H1 (cell line): ENCODE measurements at regions of chr9 and their contacts with region 1.

Region 1: GRCh38 chr9:36008774-36009300 is 27.9 kb upstream of the RECK start:
- DNase-seq: peak; percentile 50 to 77
- H3K4me3 ChIP-seq: no peak overlapping the region
- H3K27ac ChIP-seq: no peak overlapping the region
- H3K4me1 ChIP-seq: no peaks in the 10 kb centered on the region
- H3K27me3 ChIP-seq: peaks cover 0 to 4% (median 0%) of the 10 kb centered on the region in 4 experiments; a peak in 2 of 7 replicates
- CTCF ChIP-seq: peak; percentile 98 to 100 (median 100)
- EP300 ChIP-seq: no peak
- POLR2A ChIP-seq: no peak
- RAD21 ChIP-seq: peak; percentile 84 to 85

Region 2: GRCh38 chr9:35954942-35955546 is 53.8 kb before region 1 on chr9:
- CTCF ChIA-PET with region 1: interaction called, 57 read pairs
- POLR2A ChIA-PET with region 1: interaction called, 4 read pairs
- DNase-seq: peak in 1 of 2 experiments; percentile 50
- H3K4me3 ChIP-seq: no peak overlapping the region
- H3K27ac ChIP-seq: no peak overlapping the region
- H3K4me1 ChIP-seq: no peaks in the 10 kb centered on the region
- H3K27me3 ChIP-seq: peaks cover 0 to 2% (median 0%) of the 10 kb centered on the region in 4 experiments; a peak in 1 of 7 replicates
- CTCF ChIP-seq: peak in 2 of 3 experiments; percentile 87 to 88; a peak in 3 of 4 replicates
- EP300 ChIP-seq: no peak
- POLR2A ChIP-seq: no peak
- RAD21 ChIP-seq: peak; percentile 86 to 88

Region 3: DNA sequence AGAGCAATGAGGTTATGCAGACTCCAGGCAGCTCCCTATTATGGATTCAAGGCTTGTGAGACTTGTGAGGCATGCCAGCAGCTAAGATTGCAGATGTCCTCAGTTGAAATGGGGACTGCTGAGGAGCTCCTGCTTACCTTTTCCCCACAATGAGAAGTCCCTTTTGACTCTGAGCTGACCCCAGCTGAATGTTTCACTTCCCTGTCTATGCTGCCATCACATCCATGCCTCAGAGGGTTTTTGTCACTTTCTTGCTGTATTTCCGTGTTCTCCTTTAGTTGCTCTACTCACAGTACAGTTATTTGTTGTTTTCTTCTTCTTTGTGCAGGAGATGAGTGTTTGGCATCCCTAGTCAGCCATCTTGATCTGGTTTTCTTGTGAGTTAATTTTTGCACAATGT is 32.1 kb before region 1 on chr9:
- CTCF ChIA-PET with region 1: interaction called, 30 read pairs
- POLR2A ChIA-PET with region 1: no interaction called
- DNase-seq: no peak
- H3K4me3 ChIP-seq: no peak overlapping the region
- H3K27ac ChIP-seq: no peak overlapping the region
- H3K4me1 ChIP-seq: no peaks in the 10 kb centered on the region
- H3K27me3 ChIP-seq: peaks cover 0 to 2% (median 0%) of the 10 kb centered on the region in 4 experiments; a peak in 2 of 7 replicates
- CTCF ChIP-seq: no peak
- EP300 ChIP-seq: no peak
- POLR2A ChIP-seq: no peak
- RAD21 ChIP-seq: no peak

Region 4: GRCh38 chr9:36023260-36024048 is 14.6 kb after region 1 on chr9:
- CTCF ChIA-PET with region 1: interaction called, 68 read pairs
- POLR2A ChIA-PET with region 1: no interaction called
- DNase-seq: peak in 1 of 2 experiments; percentile 83
- H3K4me3 ChIP-seq: no peak overlapping the region
- H3K27ac ChIP-seq: no peak overlapping the region
- H3K4me1 ChIP-seq: no peaks in the 10 kb centered on the region
- H3K27me3 ChIP-seq: no peaks in the 10 kb centered on the region
- CTCF ChIP-seq: peak; percentile 74 to 95 (median 95)
- EP300 ChIP-seq: no peak
- POLR2A ChIP-seq: no peak
- RAD21 ChIP-seq: peak; percentile 84 to 90

Region 5: GRCh38 chr9:36036780-36037548 is 28.1 kb after region 1 on chr9 and contains the start of gene RECK:
- CTCF ChIA-PET with region 1: interaction called, 10 read pairs
- POLR2A ChIA-PET with region 1: no interaction called
- DNase-seq: peak; percentile 65 to 98
- H3K4me3 ChIP-seq: peak within 1 kb of the TSS; percentile 78 to 93 (median 84)
- H3K27ac ChIP-seq: peak within 1 kb of the TSS; percentile 82
- H3K4me1 ChIP-seq: peaks cover 0 to 4% (median 0%) of the 10 kb centered on the region in 4 experiments; a peak in 3 of 7 replicates
- H3K27me3 ChIP-seq: no peaks in the 10 kb centered on the region
- CTCF ChIP-seq: no peak
- EP300 ChIP-seq: no peak
- POLR2A ChIP-seq: peak; percentile 38 to 89
- RAD21 ChIP-seq: no peak
- total RNA-seq, gene RECK: 9.8 and 10.0 TPM in 2 replicates

Region 6: DNA sequence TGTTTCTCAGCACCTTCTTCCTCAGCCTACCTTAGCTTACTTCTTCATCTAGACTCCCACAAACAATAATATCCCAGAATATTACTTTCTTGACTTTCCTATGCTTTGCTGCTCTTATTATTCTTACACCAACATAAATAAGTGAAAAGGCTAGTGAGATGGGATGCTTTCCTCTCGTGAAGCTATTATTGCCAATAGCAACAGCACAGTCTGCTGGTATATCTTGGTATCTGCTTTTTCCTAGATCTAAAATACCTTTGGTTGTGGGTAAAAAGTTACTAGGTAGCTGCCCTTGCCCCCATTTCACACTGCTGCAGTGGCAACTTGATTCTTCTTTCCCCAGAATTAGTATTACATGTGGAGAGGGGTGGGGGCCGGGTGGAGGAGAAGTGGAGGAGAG is 101.6 kb after region 1 on chr9:
- CTCF ChIA-PET with region 1: interaction called, 15 read pairs
- POLR2A ChIA-PET with region 1: no interaction called
- DNase-seq: no peak
- H3K4me3 ChIP-seq: no peak overlapping the region
- H3K27ac ChIP-seq: no peak overlapping the region
- H3K4me1 ChIP-seq: no peaks in the 10 kb centered on the region
- H3K27me3 ChIP-seq: no peaks in the 10 kb centered on the region
- CTCF ChIP-seq: peak in 2 of 3 experiments; percentile 19 to 23; a peak in 2 of 4 replicates
- EP300 ChIP-seq: no peak
- POLR2A ChIP-seq: no peak
- RAD21 ChIP-seq: peak; percentile 32 to 49